ENCODE measurements at regions of chr1 and their contacts with region 1.

Region 1: DNA sequence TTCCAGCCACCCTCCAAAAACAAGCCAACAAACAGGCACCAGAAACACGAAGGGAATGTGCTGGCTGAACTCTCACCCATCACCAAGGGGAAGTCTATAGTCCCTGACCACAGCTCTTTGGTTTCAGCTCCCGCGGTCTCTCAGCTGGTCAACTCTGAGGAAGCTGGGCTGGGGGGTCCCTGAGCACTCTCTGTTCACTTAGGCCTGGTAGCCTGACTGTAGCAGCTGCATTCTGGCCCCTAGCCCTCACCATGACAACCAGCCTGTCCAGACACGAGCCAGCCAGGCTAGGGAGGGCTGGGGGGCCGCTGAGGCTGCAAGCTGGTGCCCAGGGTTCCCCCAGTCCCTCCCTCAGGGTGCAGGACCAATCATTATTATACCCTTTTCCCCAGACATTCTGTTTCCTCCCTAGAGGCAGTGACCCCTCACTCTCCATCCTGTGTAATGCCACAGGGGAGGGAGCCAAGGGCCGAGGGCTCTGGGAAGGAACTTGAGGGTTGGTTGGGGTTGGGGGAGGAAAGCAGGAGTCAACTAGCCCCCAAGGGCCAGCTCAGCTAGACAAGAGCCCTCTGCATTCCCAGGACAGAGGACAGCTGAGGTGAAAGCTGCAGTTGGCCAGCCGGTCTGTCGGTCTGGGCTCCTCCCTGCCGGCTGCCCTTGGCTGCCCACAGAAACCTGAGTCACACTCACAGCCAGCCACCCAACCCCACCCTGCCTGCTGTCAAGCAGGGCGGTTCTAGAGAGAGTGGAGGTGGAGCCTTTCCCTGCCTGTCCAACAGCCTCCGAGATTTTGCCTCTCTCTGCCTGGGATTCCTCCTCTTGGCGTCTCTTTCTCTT is 1.2 kb upstream of the TRAPPC3 start:
- DNase-seq: peak; percentile 96
- H3K4me3 ChIP-seq: peak overlapping the region in 3 of 8 donors; percentile 11 to 85 (median 63)
- H3K27ac ChIP-seq: peak overlapping the region; percentile 81 to 100 (median 92)
- H3K4me1 ChIP-seq: peaks cover 44 to 89% (median 70%) of the 10 kb centered on the region in 6 donors
- H3K27me3 ChIP-seq: no peaks in the 10 kb centered on the region
- CTCF ChIP-seq: peak in 1 of 11 experiments; percentile 17
- POLR2A ChIP-seq: peak in 1 of 3 donors; percentile 43

Region 2: DNA sequence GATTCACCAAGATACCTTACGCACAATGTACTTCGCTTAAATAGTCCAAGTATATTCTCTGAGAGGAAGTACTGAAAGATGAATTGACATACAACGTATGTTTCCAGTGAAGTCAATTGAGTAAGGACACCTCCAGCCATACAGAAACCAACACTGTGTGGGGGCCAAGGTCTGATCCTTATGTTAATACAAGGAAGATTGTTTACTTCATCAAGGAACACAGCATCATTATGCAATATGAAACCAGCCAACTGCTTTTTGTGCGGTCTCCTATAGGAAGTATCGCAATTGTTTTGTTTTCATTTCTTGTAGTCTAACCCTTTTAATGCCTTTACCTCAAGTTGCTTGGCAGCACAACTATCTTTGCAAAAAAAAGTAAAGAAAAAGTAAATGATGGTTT is 94.8 kb before region 1 on chr1:
- intact Hi-C with region 1: no loop called
- DNase-seq: no peak
- H3K4me3 ChIP-seq: peak overlapping the region in 1 of 8 donors; percentile 17
- H3K27ac ChIP-seq: peak overlapping the region in 4 of 8 donors; percentile 47 to 69 (median 54)
- H3K4me1 ChIP-seq: peaks cover 0 to 7% (median 0%) of the 10 kb centered on the region in 6 donors
- H3K27me3 ChIP-seq: no peaks in the 10 kb centered on the region
- CTCF ChIP-seq: no peak
- POLR2A ChIP-seq: no peak

Region 3: GRCh38 chr1:36187800-36188593 is 37.5 kb after region 1 on chr1:
- intact Hi-C with region 1: loop called (anchors 5 kb)
- DNase-seq: peak; percentile 91
- H3K4me3 ChIP-seq: no peak overlapping the region
- H3K27ac ChIP-seq: peak overlapping the region; percentile 20 to 84 (median 74)
- H3K4me1 ChIP-seq: peaks cover 7 to 14% (median 9%) of the 10 kb centered on the region in 6 donors
- H3K27me3 ChIP-seq: no peaks in the 10 kb centered on the region
- CTCF ChIP-seq: peak; percentile 82 to 98 (median 93)
- POLR2A ChIP-seq: no peak

Region 4: DNA sequence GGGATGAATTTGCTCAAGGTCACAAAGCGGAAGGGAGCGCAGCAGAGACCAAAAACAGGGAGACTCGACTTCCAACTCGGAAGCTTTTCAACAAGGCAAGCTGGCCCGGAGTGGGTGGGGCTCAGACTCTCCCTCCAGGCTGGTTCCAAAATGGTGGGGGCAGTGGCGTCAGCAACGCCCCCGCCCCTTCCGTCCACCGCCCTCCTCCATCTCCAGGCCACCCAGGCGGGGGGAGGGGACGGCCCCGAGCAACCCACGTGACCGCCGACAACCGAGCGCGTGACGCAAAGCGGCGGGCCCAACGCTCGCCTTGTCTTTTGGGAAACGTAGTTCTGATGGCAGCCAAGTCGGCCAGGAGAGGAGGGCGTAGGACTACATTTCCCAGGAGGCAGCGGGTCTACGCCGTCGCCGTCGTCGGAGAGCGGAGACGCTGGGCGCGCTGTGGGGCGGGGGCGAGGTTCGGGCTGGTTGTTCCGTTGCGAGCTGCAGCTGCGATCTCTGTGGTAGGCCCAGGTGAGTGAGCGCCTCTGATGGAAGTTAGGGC is 73.6 kb after region 1 on chr1 and contains the start of gene THRAP3:
- intact Hi-C with region 1: loop called (anchors 10 kb)
- DNase-seq: peak; percentile 100
- H3K4me3 ChIP-seq: peak within 1 kb of the TSS; percentile 71 to 94 (median 84)
- H3K27ac ChIP-seq: peak within 1 kb of the TSS; percentile 94 to 98 (median 96)
- H3K4me1 ChIP-seq: peaks cover 32 to 61% (median 53%) of the 10 kb centered on the region in 6 donors
- H3K27me3 ChIP-seq: no peaks in the 10 kb centered on the region
- CTCF ChIP-seq: peak in 2 of 11 experiments; percentile 24 to 29
- POLR2A ChIP-seq: peak; percentile 80 to 88 (median 85)
- total RNA-seq, gene THRAP3: 72.8 to 109 (median 95.4) TPM

Region 5: GRCh38 chr1:36285448-36286101 is 135.1 kb after region 1 on chr1:
- intact Hi-C with region 1: loop called (anchors 10 kb)
- DNase-seq: no peak
- H3K4me3 ChIP-seq: no peak overlapping the region
- H3K27ac ChIP-seq: peak overlapping the region in 6 of 8 donors; percentile 22 to 65 (median 42)
- H3K4me1 ChIP-seq: peaks cover 0 to 52% (median 24%) of the 10 kb centered on the region in 6 donors
- H3K27me3 ChIP-seq: no peaks in the 10 kb centered on the region
- CTCF ChIP-seq: peak; percentile 61 to 82 (median 74)
- POLR2A ChIP-seq: no peak